ENCODE measurements at regions of chr17 and their contacts with region 1.

Region 1: DNA sequence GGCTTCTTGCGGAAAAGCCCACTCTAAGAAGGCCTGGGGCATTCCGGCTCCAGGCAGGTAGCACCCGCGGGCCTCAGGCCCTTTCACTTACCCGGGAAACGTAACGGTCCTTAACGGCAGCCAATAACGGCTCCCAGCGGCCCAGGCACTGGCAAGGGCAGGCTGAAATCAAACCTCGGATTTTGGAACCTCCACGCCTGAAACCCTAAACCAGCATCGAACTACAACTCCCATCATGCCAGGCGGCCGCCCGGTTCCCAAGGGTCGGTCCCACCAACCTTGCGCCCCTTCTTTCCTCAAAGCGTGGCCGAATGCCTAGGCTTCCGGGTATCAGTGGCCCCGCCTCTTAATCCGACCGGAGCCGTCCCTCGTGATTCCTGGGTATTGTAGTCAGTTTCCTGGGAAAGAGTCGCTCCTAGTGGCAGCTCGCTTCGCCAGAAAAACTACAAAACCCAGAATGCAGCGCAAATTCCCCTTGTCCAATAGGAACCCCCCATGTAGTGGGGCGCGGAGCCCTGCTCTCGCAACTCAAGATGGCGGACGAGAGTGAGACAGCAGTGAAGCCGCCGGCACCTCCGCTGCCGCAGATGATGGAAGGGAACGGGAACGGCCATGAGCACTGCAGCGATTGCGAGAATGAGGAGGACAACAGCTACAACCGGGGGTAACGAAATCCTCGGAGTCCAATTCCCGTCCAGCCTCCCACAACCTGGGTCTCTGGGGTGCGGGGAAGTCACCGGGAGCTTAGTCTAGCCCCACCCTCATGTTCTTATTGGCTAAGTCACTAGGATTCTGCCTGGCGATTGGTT is at the start of gene NMT1:
- DNase-seq: peak; percentile 96
- H3K4me3 Mint-ChIP-seq: peak within 1 kb of the TSS; percentile 92
- H3K27ac Mint-ChIP-seq: peak within 1 kb of the TSS; percentile 100
- H3K4me1 Mint-ChIP-seq: peaks cover 25% of the 10 kb centered on the region
- H3K27me3 Mint-ChIP-seq: peaks cover 2% of the 10 kb centered on the region
- total RNA-seq, gene NMT1: 168 and 173 TPM in 2 replicates

Region 2: DNA sequence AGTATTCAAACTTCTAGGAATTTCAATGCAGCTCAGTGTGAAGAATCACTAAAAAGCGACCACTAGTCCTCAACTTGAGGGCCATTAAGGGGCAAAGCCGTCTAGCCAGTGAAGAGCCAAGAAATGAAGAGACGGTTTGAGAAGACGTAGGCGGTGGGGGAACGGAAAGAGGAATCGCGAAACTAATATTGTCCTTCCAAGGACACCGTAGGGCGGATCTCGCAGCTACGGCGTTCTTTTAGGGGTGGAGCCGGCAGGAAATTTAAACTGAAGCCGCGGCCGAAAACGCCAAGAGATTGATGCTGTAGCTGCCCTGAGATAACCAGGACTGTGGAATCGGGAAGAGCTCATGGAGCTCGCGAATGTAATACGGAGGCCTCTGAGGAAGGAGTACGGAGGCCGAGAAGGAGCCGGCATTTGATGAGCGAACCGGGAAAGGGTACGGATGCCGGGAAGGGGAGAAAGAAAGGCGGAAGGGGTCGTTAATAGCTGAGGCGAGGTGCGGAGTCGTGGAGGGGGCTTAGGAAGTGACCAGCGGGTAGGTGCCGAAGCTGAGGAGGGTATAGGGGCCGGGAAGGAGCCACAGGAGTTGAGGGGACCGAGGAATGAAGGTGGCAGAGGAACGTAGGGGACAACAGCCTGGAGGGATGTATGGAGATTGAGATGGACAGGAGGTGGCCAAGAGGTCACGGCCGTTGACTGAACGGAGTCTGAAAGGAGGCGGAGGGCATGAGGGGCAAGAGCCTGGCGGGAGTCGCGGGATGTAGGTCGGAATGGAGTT is 352.4 kb before region 1 on chr17 and contains the start of gene DBF4B:
- intact Hi-C with region 1: loop called (anchors 5 kb)
- DNase-seq: peak; percentile 81
- H3K4me3 Mint-ChIP-seq: no peak within 1 kb of the TSS
- H3K27ac Mint-ChIP-seq: no peak within 1 kb of the TSS
- H3K4me1 Mint-ChIP-seq: peaks cover 5% of the 10 kb centered on the region
- H3K27me3 Mint-ChIP-seq: peaks cover 7% of the 10 kb centered on the region
- total RNA-seq, gene DBF4B: 22.5 and 22.8 TPM in 2 replicates

Region 3: DNA sequence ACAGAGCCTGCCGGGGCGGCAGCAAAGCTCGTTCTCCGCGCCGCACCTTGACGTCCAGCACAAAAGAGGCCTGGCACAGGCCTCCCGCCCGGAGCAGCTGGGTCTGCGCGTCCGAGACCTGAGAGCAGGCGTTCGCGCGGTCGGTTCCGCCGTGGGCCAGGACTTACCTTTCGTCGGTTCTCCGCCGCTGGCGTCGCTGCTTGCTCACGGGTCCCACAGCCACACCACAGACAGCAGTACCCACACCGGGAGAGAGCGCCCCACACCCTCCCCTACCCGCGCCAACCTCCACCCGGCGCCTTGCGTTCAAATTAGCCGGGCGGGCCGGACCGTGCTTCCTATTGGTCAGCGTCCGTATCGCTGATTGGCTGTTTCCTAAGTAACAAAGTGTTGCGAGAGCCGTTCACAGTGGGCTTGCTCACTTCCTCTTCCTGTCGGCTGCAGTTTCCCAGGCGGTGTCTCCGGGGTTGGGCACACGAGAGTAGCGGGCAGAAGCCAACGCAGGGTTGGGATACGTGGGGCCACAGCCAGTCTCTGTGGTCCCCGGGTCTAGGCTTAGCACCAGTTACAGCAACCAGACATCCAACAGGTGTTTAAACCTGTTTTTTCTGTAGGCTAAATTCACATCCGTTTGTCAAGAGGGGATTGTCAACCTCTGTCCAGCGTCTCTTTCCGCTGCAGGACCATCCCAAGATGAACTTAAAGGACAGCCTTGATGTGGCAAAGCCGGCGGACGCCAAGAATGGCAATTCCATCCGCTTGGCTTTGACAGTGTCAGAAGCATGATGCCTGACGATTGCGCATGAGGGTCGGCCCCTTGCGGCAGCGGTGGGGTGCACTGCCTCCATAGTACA is 113.3 kb before region 1 on chr17 and contains the start of gene KIF18B:
- intact Hi-C with region 1: loop called (anchors 1 kb)
- DNase-seq: peak; percentile 90
- H3K4me3 Mint-ChIP-seq: peak within 1 kb of the TSS; percentile 95
- H3K27ac Mint-ChIP-seq: peak within 1 kb of the TSS; percentile 92
- H3K4me1 Mint-ChIP-seq: peaks cover 37% of the 10 kb centered on the region
- H3K27me3 Mint-ChIP-seq: peaks cover 2% of the 10 kb centered on the region
- total RNA-seq, gene KIF18B: 41.4 and 42.8 TPM in 2 replicates

Region 4: DNA sequence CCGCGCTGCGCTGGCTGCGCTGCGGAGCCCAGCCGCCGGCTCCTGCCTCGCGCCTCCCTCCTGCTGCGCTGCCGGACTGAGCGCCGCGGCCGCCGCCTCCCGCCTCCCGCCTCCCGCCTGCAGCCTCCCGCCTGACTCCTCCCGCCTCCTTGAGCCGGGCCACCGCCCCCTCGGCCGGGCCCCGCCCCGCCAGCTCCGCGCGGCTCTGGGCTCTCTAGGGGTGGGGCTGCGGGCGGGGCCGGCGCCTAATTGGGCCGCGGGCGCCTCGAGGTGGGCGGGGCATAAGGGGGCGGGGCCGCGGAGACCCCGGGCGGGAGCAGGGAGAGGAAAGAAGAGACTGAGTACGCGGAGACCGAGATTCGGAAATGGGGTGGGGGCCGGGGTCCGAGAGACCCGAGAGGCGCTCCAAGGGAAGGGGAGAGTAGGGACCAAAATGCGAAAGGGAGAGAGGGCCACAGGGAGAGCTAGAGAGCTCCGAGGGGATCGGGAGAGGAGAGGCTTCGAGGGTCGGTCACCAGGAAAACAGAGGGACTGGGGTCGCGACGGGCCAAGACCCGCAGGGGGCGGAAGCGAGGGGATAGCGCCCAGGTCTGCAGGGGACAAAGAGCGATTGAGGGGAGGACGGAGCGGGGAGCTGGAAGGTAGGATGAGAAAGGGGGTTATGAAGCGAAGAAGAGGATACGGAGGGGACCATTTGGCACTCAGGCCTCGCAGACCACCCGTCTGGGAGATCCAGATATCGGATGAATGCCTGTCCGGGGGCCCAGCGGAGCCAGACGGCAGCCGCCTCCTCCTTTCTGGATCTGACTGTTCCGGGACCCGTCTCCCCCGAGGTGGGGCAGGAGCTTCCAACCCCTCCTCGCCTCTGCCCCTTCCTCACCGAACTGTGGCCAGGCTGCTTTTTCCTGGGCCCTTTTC is 92.5 kb before region 1 on chr17 and contains the start of gene C1QL1:
- intact Hi-C with region 1: loop called (anchors 1 kb)
- DNase-seq: peak; percentile 86
- H3K4me3 Mint-ChIP-seq: peak within 1 kb of the TSS; percentile 78
- H3K27ac Mint-ChIP-seq: no peak within 1 kb of the TSS
- H3K4me1 Mint-ChIP-seq: peaks cover 38% of the 10 kb centered on the region
- H3K27me3 Mint-ChIP-seq: peaks cover 67% of the 10 kb centered on the region
- total RNA-seq, gene C1QL1: 0.39 and 0.54 TPM in 2 replicates

Region 5: GRCh38 chr17:45148183-45149036 is 87.4 kb after region 1 on chr17 and contains the start of gene HEXIM1:
- intact Hi-C with region 1: loop called (anchors 1 kb)
- DNase-seq: peak; percentile 99
- H3K4me3 Mint-ChIP-seq: peak within 1 kb of the TSS; percentile 96
- H3K27ac Mint-ChIP-seq: peak within 1 kb of the TSS; percentile 98
- H3K4me1 Mint-ChIP-seq: peaks cover 26% of the 10 kb centered on the region
- H3K27me3 Mint-ChIP-seq: no peaks in the 10 kb centered on the region
- total RNA-seq, gene HEXIM1: 65.9 and 67.9 TPM in 2 replicates

Region 6: GRCh38 chr17:45161019-45161825 is 100.2 kb after region 1 on chr17:
- intact Hi-C with region 1: loop called (anchors 1 kb)
- DNase-seq: peak; percentile 98
- H3K4me3 Mint-ChIP-seq: peak overlapping the region; percentile 98
- H3K27ac Mint-ChIP-seq: peak overlapping the region; percentile 98
- H3K4me1 Mint-ChIP-seq: peaks cover 32% of the 10 kb centered on the region
- H3K27me3 Mint-ChIP-seq: no peaks in the 10 kb centered on the region

Region 7: GRCh38 chr17:45228763-45229539 is 167.9 kb after region 1 on chr17:
- intact Hi-C with region 1: loop called (anchors 2 kb)
- DNase-seq: peak; percentile 81
- H3K4me3 Mint-ChIP-seq: peak overlapping the region; percentile 99
- H3K27ac Mint-ChIP-seq: peak overlapping the region; percentile 97
- H3K4me1 Mint-ChIP-seq: peaks cover 94% of the 10 kb centered on the region
- H3K27me3 Mint-ChIP-seq: no peaks in the 10 kb centered on the region

Measured in activated T-helper 1 cell treated with anti-CD3 and anti-CD28 coated beads, Interleukin-12 subunit alpha, Interleukin-12 subunit beta, Interleukin-2, Interleukin-4 antibody, amounts not matched to agents 30 ng/mL and 10 ng/mL and 1 ng/mL, durations not matched to agents 14 hours and 24 hours and 36 hours (primary cell).